Naive thymus-derived CD4-positive, alpha-beta T cell (primary cell): ENCODE measurements at regions of chr6 and their contacts with region 1.

Region 1: GRCh38 chr6:118565311-118565960 is 17.3 kb downstream of the PLN start:
- DNase-seq: peak in 7 of 9 donors; percentile 55 to 77 (median 63)
- ATAC-seq: peak; percentile 94
- H3K4me3 ChIP-seq: no peak overlapping the region
- H3K4me3 Mint-ChIP-seq: no peak overlapping the region
- H3K27ac ChIP-seq: peak overlapping the region; percentile 34
- H3K27ac Mint-ChIP-seq: peak overlapping the region; percentile 16 to 90 (median 61)
- H3K4me1 ChIP-seq: no peaks in the 10 kb centered on the region
- H3K4me1 Mint-ChIP-seq: peaks cover 7 to 60% (median 42%) of the 10 kb centered on the region in 7 donors
- H3K27me3 ChIP-seq: no peaks in the 10 kb centered on the region
- H3K27me3 Mint-ChIP-seq: no peaks in the 10 kb centered on the region

Region 2: GRCh38 chr6:118618679-118619377 is 53.4 kb after region 1 on chr6:
- CTCF ChIA-PET with region 1: interaction called, 11 read pairs
- POLR2A ChIA-PET with region 1: no interaction called
- intact Hi-C with region 1: loop called (anchors 1 kb)
- DNase-seq: peak; percentile 36 to 70 (median 55)
- ATAC-seq: peak; percentile 92
- H3K4me3 ChIP-seq: no peak overlapping the region
- H3K4me3 Mint-ChIP-seq: peak overlapping the region in 3 of 10 donors; percentile 2 to 52 (median 46)
- H3K27ac ChIP-seq: no peak overlapping the region
- H3K27ac Mint-ChIP-seq: peak overlapping the region; percentile 26 to 96 (median 79)
- H3K4me1 ChIP-seq: peaks cover 0 to 8% of the 10 kb centered on the region in 2 donors
- H3K4me1 Mint-ChIP-seq: peaks cover 21 to 86% (median 77%) of the 10 kb centered on the region in 7 donors
- H3K27me3 ChIP-seq: no peaks in the 10 kb centered on the region
- H3K27me3 Mint-ChIP-seq: no peaks in the 10 kb centered on the region

Region 3: DNA sequence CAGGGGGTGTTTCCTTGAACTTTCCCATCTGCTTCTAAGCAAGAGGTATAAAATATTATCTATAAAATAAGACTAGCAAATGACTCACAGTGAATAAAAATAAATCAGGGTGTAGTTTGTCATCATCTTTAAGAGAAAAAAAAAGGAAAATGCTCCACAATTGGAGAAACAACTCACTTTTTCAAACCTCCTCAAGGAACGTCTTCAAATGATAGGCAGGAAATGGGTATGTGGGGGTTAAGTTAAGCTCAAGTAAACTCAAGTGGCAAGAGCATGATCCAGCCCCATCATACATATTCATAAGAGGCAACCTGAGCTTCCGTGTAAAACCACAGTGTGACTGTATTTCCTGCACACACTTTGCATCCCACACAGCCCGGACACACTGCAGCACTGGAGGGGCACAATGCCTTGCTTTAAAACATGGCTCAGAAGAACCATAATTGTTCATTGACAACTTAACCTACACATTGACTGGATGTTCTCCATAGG is 144.5 kb after region 1 on chr6:
- CTCF ChIA-PET with region 1: interaction called, 15 read pairs
- POLR2A ChIA-PET with region 1: interaction called, 24 read pairs
- intact Hi-C with region 1: no loop called
- DNase-seq: peak; percentile 25 to 87 (median 83)
- ATAC-seq: peak; percentile 93
- H3K4me3 ChIP-seq: peak overlapping the region; percentile 91
- H3K4me3 Mint-ChIP-seq: peak overlapping the region; percentile 95 to 100 (median 97)
- H3K27ac ChIP-seq: peak overlapping the region; percentile 76
- H3K27ac Mint-ChIP-seq: peak overlapping the region; percentile 94 to 99 (median 97)
- H3K4me1 ChIP-seq: peaks cover 48 to 49% of the 10 kb centered on the region in 2 donors
- H3K4me1 Mint-ChIP-seq: peaks cover 47 to 81% (median 74%) of the 10 kb centered on the region in 7 donors
- H3K27me3 ChIP-seq: no peaks in the 10 kb centered on the region
- H3K27me3 Mint-ChIP-seq: no peaks in the 10 kb centered on the region

Region 4: DNA sequence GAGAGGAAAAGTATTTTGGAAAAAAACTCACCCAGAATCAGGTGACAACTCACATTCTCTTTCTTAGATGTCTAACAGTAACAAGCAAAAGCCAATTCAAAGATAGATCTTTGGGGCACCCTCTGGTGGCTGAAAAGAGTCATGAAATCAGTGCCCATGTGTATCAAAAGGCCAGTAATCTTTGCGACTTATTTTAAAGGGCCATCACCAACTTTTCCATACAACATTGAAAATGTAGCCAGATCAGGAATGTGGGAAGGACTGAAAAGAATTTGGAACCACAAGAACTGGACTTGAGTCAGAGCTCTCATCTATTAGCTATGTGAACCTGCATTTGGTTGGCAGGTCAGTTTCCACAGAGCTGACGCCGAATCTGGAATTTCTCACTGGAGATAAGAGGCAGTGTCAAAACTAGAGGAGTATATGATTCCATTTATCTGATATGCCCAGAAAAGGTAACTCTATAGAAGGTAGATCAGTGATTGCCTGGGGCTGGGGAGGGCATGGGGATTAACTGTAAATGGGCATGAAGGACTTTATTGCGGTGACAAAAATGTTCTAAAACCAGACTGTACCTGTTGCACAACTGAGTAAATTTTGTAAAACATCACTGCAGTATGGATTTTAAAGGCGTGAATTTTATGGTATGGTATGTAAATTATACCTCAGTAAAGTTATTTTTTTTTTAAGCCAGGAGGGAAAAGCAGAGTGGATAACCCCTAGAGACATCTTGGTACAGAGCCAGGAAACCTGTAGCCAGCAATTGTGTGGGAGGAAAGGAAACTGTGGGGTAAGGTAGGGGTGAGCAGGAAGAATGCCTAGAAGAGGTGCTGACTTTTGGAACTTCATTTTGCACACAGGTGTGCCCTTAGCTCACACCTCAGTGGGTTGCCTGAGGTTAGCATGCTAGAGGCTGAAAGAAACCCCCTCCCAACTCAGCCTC is 211.4 kb after region 1 on chr6:
- CTCF ChIA-PET with region 1: interaction called, 13 read pairs
- POLR2A ChIA-PET with region 1: interaction called, 4 read pairs
- intact Hi-C with region 1: loop called (anchors 1 kb)
- DNase-seq: peak in 8 of 9 donors; percentile 42 to 77 (median 65)
- ATAC-seq: peak; percentile 92
- H3K4me3 ChIP-seq: no peak overlapping the region
- H3K4me3 Mint-ChIP-seq: peak overlapping the region; percentile 1 to 75 (median 48)
- H3K27ac ChIP-seq: no peak overlapping the region
- H3K27ac Mint-ChIP-seq: peak overlapping the region in 8 of 9 donors; percentile 12 to 87 (median 75)
- H3K4me1 ChIP-seq: peaks cover 4 to 11% of the 10 kb centered on the region in 2 donors
- H3K4me1 Mint-ChIP-seq: peaks cover 16 to 31% (median 23%) of the 10 kb centered on the region in 7 donors
- H3K27me3 ChIP-seq: no peaks in the 10 kb centered on the region
- H3K27me3 Mint-ChIP-seq: peaks cover 0 to 17% (median 0%) of the 10 kb centered on the region in 5 donors

Region 5: GRCh38 chr6:118963003-118963402 is 397.6 kb after region 1 on chr6:
- CTCF ChIA-PET with region 1: no interaction called
- POLR2A ChIA-PET with region 1: no interaction called
- intact Hi-C with region 1: loop called in 1 of 2 experiments (anchors 1 kb)
- DNase-seq: peak in 4 of 9 donors; percentile 6 to 20 (median 12)
- ATAC-seq: no peak
- H3K4me3 ChIP-seq: no peak overlapping the region
- H3K4me3 Mint-ChIP-seq: no peak overlapping the region
- H3K27ac ChIP-seq: no peak overlapping the region
- H3K27ac Mint-ChIP-seq: no peak overlapping the region
- H3K4me1 ChIP-seq: no peaks in the 10 kb centered on the region
- H3K4me1 Mint-ChIP-seq: peaks cover 0 to 14% (median 7%) of the 10 kb centered on the region in 7 donors
- H3K27me3 ChIP-seq: no peaks in the 10 kb centered on the region
- H3K27me3 Mint-ChIP-seq: no peaks in the 10 kb centered on the region